Adrenal gland (tissue), 19 donors: ENCODE measurements at regions of chr11 and their contacts with region 1.

Region 1: DNA sequence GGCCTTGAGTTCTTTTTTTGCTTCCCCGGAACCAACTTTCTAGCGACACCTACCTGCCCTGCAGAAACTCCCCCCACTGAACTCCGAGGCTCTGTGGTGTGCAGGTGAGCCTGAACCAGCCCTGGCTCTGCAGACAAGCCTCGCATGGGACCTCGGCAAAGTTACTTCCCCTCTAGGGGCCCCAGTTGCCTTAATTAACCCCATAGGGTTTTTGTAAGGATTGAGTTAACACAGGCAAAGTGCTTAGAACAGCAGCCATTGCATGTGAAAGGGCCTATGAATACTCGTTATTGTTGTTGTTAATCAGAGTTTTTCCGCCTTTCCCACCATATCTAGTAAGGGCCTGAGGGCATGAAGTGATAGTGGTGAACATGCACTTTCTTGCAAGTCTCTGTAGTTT is 12.6 kb upstream of the SYT13 start:
- DNase-seq: no peak
- H3K4me3 ChIP-seq: no peak overlapping the region
- H3K27ac ChIP-seq: no peak overlapping the region
- H3K4me1 ChIP-seq: no peaks in the 10 kb centered on the region
- H3K27me3 ChIP-seq: no peaks in the 10 kb centered on the region
- CTCF ChIP-seq: no peak
- POLR2A ChIP-seq: no peak

Region 2: GRCh38 chr11:44931466-44931865 is 367.3 kb before region 1 on chr11:
- intact Hi-C with region 1: loop called in 1 of 2 experiments (anchors 5 kb)
- DNase-seq: no peak
- H3K4me3 ChIP-seq: no peak overlapping the region
- H3K27ac ChIP-seq: no peak overlapping the region
- H3K4me1 ChIP-seq: no peaks in the 10 kb centered on the region
- H3K27me3 ChIP-seq: no peaks in the 10 kb centered on the region
- CTCF ChIP-seq: no peak
- POLR2A ChIP-seq: no peak

Region 3: DNA sequence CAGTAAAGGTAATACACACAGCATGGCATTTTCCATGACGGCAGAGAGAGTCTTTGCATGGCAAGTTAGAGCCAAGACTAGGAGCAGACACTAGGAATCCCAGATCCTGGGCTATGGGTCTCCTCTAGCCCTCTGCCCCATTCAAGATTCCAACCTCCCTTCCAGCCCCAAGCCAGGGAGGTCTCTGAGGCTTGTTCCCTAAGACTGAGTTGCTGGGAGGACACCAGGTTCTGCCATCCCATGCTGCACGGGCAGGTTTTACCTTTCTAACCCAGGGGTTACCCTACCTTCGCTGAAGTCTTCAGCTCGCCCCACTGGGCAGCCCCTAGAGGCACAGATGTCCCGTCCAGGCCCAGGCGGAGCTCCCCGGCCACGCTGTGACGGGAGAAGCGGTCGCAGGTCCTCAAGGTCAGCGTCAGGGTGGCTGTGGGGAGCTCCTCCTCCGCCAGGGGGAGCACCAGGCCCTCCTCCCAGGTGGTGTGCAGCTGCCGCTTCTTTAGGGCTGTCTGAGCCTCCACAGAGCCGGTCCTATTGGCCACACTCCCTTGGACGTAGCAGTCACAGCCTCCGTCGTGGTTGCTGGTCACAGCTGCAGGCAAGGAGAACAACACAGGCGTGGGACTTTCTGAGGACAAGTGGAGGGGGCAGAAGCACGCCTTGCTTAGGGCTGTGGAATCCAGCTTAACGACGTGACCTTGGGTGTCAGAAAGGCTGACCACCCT is 46.4 kb before region 1 on chr11:
- intact Hi-C with region 1: loop called in 1 of 2 experiments (anchors 5 kb)
- DNase-seq: peak; percentile 56 to 82 (median 78)
- H3K4me3 ChIP-seq: no peak overlapping the region
- H3K27ac ChIP-seq: no peak overlapping the region
- H3K4me1 ChIP-seq: no peaks in the 10 kb centered on the region
- H3K27me3 ChIP-seq: no peaks in the 10 kb centered on the region
- CTCF ChIP-seq: peak; percentile 55 to 79 (median 61)
- POLR2A ChIP-seq: no peak